A673 (cell line): ENCODE measurements at regions of chr1 and their contacts with region 1.

Region 1: GRCh38 chr1:28259307-28260167 is at the start of gene SESN2:
- DNase-seq: peak; percentile 99
- H3K4me3 ChIP-seq: peak within 1 kb of the TSS; percentile 100
- H3K27ac ChIP-seq: peak within 1 kb of the TSS; percentile 92
- H3K4me1 ChIP-seq: peaks cover 11% of the 10 kb centered on the region
- H3K27me3 ChIP-seq: no peaks in the 10 kb centered on the region
- CTCF ChIP-seq: no peak
- total RNA-seq, gene SESN2: 15.7 and 19.8 TPM in 2 replicates

Region 2: DNA sequence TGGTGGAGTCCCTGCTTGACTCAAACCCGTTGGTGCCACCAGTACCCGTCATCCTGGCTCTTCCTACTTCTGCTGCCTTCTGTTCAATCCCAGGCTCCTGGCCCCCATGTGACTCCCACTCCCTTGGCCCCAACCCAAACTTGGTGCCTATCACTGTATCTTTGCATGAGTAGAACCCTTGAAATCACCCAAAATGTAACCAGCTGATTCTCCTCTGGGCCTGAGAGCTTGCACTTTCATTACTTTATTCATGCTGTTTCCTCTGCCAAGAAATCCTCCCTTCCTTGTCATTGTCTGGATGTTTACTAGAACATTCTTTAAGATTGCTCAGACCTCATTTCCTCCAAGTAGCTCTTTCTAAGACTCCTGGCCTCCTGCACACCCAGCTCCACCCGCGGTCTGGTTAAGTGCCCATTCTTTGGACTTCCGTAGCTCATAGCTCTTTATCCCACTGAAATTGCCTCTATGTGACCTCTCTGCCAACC is 98.7 kb before region 1 on chr1:
- CTCF ChIA-PET with region 1: no interaction called
- POLR2A ChIA-PET with region 1: no interaction called
- intact Hi-C with region 1: no loop called
- DNase-seq: no peak
- H3K4me3 ChIP-seq: no peak overlapping the region
- H3K27ac ChIP-seq: no peak overlapping the region
- H3K4me1 ChIP-seq: no peaks in the 10 kb centered on the region
- H3K27me3 ChIP-seq: no peaks in the 10 kb centered on the region
- CTCF ChIP-seq: no peak

Region 3: DNA sequence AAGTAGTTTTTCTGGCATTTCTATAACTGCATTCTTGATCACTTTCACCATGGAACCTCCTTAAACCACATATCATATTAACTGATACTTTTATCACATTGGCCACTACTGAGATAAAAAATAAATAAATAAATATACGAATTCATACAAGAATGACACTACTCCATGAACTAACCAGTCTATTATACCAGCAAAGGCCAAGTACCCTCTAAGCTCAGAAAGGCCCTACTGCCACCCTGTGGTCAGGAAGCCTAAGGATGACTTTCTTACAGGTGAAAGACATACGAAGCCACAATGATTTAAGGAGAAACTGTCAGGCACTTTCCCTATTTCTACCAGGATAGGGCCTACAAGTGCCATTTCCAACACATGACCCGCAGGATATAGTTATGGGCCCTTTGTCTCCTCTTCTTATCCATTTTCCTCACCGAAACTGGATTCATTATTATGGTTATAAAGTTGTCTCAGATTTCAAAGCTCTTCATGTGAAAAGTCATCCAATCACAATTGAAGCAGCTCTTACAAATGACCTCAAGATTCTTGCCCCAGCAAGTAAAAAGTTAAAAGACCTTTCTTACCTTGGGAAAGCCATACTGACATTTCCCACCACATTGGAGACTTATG is 50.6 kb before region 1 on chr1:
- CTCF ChIA-PET with region 1: no interaction called
- POLR2A ChIA-PET with region 1: interaction called, 14 read pairs
- intact Hi-C with region 1: no loop called
- DNase-seq: peak; percentile 60
- H3K4me3 ChIP-seq: no peak overlapping the region
- H3K27ac ChIP-seq: peak overlapping the region; percentile 7
- H3K4me1 ChIP-seq: no peaks in the 10 kb centered on the region
- H3K27me3 ChIP-seq: no peaks in the 10 kb centered on the region
- CTCF ChIP-seq: peak; percentile 63

Region 4: DNA sequence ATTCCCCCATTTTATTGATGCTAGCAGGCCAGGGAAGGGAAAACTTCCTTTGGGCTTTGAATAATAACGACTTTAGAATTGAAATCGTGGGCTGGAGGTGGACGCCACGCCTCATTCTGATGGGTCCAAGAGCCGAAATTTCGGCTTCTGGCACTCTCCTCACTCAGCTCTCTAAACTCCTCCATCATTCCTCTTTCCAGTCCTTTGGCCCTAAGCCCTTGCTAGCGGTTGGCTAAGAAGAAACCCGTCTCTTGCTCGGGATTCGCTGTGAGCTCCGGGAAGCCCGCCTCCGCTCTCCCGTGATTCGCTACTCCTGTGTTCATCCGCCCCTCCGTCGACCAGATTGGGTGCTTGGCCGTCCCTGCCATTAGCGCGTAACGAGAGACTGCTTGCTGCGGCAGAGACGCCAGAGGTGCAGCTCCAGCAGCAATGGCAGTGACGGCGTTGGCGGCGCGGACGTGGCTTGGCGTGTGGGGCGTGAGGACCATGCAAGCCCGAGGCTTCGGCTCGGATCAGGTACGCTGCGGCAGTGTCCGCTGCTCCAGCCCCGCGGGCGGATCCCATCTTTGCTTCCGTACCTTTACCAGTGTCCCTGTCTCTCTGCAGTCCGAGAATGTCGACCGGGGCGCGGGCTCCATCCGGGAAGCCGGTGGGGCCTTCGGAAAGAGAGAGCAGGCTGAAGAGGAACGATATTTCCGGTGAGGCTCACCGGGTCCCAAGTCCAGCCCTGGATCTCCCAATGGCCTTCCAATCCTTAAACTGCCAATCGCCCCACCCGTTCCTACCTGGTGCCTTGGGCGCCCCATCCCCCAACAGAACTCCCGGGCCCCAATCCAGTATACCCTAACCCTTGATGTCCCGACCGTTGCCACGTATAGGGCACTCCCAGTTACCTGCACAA is 23.5 kb before region 1 on chr1 and contains the start of gene ATP5IF1:
- CTCF ChIA-PET with region 1: no interaction called
- POLR2A ChIA-PET with region 1: interaction called, 13 read pairs
- intact Hi-C with region 1: no loop called
- DNase-seq: peak; percentile 99
- H3K4me3 ChIP-seq: peak within 1 kb of the TSS; percentile 97
- H3K27ac ChIP-seq: peak within 1 kb of the TSS; percentile 82
- H3K4me1 ChIP-seq: peaks cover 5% of the 10 kb centered on the region
- H3K27me3 ChIP-seq: no peaks in the 10 kb centered on the region
- CTCF ChIP-seq: no peak
- total RNA-seq, gene ATP5IF1: 144 and 158 TPM in 2 replicates

Region 5: GRCh38 chr1:28329395-28330153 is 70.0 kb after region 1 on chr1:
- CTCF ChIA-PET with region 1: no interaction called
- POLR2A ChIA-PET with region 1: no interaction called
- intact Hi-C with region 1: loop called (anchors 2 kb)
- DNase-seq: peak; percentile 43
- H3K4me3 ChIP-seq: peak overlapping the region; percentile 67
- H3K27ac ChIP-seq: peak overlapping the region; percentile 88
- H3K4me1 ChIP-seq: peaks cover 5% of the 10 kb centered on the region
- H3K27me3 ChIP-seq: no peaks in the 10 kb centered on the region
- CTCF ChIP-seq: 0 out of 2 replicates have a peak, but pooled peaks have one; percentile 10

Region 6: DNA sequence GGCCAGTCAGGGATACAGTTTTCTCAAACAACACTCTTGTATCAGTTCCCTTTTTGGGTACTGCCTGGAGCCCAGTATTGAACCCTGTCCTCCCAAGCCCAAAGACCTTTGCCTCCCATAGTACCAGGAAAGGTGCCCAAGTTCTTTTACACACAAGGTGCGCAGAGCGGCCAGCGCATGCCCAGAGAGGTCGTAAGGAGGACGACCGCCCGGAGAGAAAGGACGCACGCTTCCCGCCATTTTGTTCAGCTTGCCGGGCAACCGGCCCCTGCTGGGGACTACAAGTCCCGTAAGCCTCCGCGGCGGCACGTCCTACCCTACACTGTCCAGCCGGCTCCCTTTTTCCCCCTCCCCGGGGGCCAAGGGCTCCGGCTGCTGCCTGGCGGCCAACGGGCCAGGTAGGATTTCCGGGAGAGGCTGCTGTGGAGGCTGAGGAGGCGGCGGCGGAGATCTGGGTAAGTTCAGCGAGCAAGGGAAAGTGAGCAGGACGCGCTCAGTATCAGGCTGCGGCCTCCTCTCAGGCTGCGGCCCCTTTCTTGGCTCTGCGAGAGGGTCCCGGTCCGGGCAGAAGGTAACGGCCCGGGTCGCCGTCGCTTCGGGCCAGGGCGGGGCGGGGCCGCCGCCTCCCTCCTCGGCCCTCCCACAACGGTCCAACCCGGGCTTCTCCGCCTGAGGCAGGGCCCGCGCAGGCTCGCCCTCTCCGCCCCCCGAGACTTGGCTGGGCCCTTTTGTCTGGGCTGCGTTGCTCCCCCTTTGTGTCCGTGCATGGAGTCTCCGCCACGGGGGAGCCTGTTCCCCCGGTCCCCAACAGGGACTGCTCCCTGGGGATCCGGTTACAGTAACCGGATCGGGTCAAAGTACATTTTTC is 110.1 kb after region 1 on chr1 and contains the start of gene PHACTR4:
- CTCF ChIA-PET with region 1: no interaction called
- POLR2A ChIA-PET with region 1: no interaction called
- intact Hi-C with region 1: no loop called
- DNase-seq: peak; percentile 93
- H3K4me3 ChIP-seq: peak within 1 kb of the TSS; percentile 69
- H3K27ac ChIP-seq: peak within 1 kb of the TSS; percentile 95
- H3K4me1 ChIP-seq: peaks cover 4% of the 10 kb centered on the region
- H3K27me3 ChIP-seq: no peaks in the 10 kb centered on the region
- CTCF ChIP-seq: no peak
- total RNA-seq, gene PHACTR4: 63.4 and 66.2 TPM in 2 replicates

Region 7: GRCh38 chr1:28392027-28392652 is 132.6 kb after region 1 on chr1:
- CTCF ChIA-PET with region 1: no interaction called
- POLR2A ChIA-PET with region 1: no interaction called
- intact Hi-C with region 1: no loop called
- DNase-seq: peak; percentile 34
- H3K4me3 ChIP-seq: no peak overlapping the region
- H3K27ac ChIP-seq: no peak overlapping the region
- H3K4me1 ChIP-seq: no peaks in the 10 kb centered on the region
- H3K27me3 ChIP-seq: no peaks in the 10 kb centered on the region
- CTCF ChIP-seq: no peak

Region 8: DNA sequence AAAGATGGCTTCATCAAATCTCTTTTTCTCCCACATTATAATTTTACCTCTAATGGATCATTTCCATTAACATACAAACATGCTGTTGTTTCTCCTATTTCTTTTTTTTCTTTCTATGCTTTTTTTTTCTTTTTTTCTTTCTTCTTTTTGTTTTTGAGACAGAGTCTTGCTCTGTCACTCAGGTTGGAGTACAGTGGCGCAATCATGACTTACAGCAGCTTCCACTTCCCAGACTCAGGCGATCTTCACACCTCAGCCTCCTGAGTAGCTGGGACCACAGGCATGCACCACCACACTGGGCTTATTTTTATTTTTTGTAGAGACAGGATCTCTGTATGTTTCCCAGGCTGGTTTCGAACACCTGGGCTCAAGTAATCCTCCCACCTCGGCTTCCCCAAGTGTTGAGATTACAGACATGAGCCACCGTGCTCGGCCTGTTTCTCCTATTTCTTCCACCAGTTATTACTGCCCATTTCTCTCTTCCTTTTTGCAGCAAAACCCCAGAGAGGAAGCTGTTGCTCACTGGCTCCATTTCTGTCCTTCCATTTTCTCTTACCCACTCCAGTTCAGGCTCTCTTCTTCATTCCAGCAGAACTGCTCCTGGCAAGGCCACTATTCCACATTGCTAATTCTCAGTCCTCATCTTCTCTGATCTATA is 520.3 kb after region 1 on chr1:
- CTCF ChIA-PET with region 1: no interaction called
- POLR2A ChIA-PET with region 1: interaction called, 11 read pairs
- intact Hi-C with region 1: no loop called
- DNase-seq: no peak
- H3K4me3 ChIP-seq: no peak overlapping the region
- H3K27ac ChIP-seq: no peak overlapping the region
- H3K4me1 ChIP-seq: no peaks in the 10 kb centered on the region
- H3K27me3 ChIP-seq: no peaks in the 10 kb centered on the region
- CTCF ChIP-seq: no peak